Activated T-helper 1 cell treated with anti-CD3 and anti-CD28 coated beads, Interleukin-12 subunit alpha, Interleukin-12 subunit beta, Interleukin-2, Interleukin-4 antibody, amounts not matched to agents 30 ng/mL and 10 ng/mL and 1 ng/mL, durations not matched to agents 14 hours and 24 hours and 36 hours (primary cell): ENCODE measurements at regions of chr11 and their contacts with region 1.

Region 1: DNA sequence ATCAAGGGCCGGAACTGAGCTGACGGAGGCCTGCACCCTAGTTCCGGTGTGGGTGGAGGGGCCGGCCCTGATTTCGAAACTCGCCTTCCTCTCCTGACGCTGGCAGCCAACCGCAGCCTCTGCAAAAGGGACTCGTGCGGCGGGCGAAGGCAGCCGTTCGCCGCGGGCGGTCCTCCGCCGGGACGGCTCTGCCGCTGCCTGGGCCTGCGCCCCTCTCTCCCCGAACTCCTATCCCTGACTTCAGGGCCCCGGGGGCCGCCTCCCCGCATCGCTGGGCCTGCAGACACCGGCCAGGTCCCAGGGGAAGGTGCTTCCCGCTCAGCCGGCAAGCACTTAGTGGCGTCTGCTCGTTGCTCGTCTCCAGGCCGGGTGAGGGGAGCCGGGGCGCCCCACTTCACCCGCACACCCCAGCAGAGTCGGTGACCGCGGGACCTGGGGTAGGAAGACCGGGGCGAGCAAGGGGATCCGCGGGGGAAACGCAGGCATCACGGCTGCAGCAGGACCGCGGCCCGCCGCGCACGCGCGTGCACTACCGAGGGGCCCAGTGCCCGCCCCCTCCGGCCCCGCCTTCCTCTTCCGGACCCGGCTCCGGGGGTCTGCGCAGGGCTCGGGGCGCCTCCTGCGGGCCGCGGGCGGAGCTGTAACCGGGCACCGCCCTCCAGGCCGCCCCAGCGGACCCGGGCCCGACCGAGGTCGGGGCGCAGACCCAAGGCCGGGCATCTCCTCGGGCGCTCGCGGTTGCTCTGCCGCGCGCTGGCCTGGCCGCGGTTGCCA is 464 bp upstream of the ANKRD13D start:
- DNase-seq: peak; percentile 88
- H3K4me3 Mint-ChIP-seq: peak overlapping the region; percentile 77
- H3K27ac Mint-ChIP-seq: peak overlapping the region; percentile 97
- H3K4me1 Mint-ChIP-seq: peaks cover 36% of the 10 kb centered on the region
- H3K27me3 Mint-ChIP-seq: peaks cover 2% of the 10 kb centered on the region

Region 2: DNA sequence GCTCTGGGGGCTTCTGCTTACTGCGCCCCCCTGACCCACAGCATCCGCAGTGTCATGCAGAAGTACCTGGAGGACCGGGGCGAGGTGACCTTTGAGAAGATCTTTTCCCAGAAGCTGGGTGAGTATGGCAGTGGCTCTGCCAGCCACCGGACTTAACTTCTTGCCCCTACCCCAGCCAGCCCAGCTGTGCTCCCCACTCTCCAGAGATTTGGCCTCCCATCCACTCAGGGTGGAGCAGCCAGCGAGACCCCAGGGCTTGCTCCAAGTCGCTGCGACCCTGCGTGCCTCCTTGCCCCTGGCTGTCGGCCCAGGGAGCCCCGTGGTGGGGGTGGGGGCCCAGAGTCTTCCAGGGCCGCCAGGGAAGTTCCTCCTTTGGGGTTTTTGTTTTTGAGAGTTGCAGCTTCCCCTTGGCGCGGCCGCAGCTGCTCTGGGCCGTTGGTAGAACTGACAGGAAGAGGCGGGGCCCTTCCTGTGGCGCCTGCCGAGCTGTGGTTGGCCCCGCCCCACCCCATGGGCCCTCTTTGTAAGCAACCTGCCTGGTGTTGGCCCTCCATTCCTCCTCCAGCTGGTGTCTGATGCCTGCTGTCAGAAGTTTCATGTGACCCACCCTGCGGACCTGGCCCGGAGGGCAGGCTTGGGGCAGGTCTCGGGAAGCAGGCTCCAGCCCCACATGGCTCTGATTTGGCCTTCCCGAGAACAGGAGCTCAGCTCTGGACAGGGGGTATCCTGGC is 11.2 kb before region 1 on chr11:
- intact Hi-C with region 1: loop called (anchors 1 kb)
- DNase-seq: peak; percentile 87
- H3K4me3 Mint-ChIP-seq: peak overlapping the region; percentile 77
- H3K27ac Mint-ChIP-seq: peak overlapping the region; percentile 96
- H3K4me1 Mint-ChIP-seq: peaks cover 50% of the 10 kb centered on the region
- H3K27me3 Mint-ChIP-seq: no peaks in the 10 kb centered on the region

Region 3: GRCh38 chr11:67303132-67303834 is 14.6 kb after region 1 on chr11 and contains the start of gene SSH3:
- intact Hi-C with region 1: loop called (anchors 1 kb)
- DNase-seq: no peak
- H3K4me3 Mint-ChIP-seq: peak within 1 kb of the TSS; percentile 15
- H3K27ac Mint-ChIP-seq: no peak within 1 kb of the TSS
- H3K4me1 Mint-ChIP-seq: peaks cover 11% of the 10 kb centered on the region
- H3K27me3 Mint-ChIP-seq: no peaks in the 10 kb centered on the region
- total RNA-seq, gene SSH3: 9.2 and 9.4 TPM in 2 replicates